Prostate gland (tissue), 2 donors: ENCODE measurements at regions of chr2 and their contacts with region 1.

Region 1: GRCh38 chr2:205766779-205767359 is 84.6 kb downstream of the NRP2 start:
- DNase-seq: peak; percentile 76
- H3K4me3 ChIP-seq: no peak overlapping the region
- H3K27ac ChIP-seq: peak overlapping the region in 1 of 2 donors; percentile 23
- H3K4me1 ChIP-seq: peaks cover 17% of the 10 kb centered on the region
- H3K27me3 ChIP-seq: no peaks in the 10 kb centered on the region
- CTCF ChIP-seq: peak; percentile 75 to 79 (median 76)
- POLR2A ChIP-seq: no peak

Region 2: GRCh38 chr2:205563646-205564045 is 203.2 kb before region 1 on chr2:
- intact Hi-C with region 1: no loop called
- DNase-seq: no peak
- H3K4me3 ChIP-seq: no peak overlapping the region
- H3K27ac ChIP-seq: no peak overlapping the region
- H3K4me1 ChIP-seq: no peaks in the 10 kb centered on the region
- H3K27me3 ChIP-seq: no peaks in the 10 kb centered on the region
- CTCF ChIP-seq: no peak
- POLR2A ChIP-seq: no peak

Region 3: DNA sequence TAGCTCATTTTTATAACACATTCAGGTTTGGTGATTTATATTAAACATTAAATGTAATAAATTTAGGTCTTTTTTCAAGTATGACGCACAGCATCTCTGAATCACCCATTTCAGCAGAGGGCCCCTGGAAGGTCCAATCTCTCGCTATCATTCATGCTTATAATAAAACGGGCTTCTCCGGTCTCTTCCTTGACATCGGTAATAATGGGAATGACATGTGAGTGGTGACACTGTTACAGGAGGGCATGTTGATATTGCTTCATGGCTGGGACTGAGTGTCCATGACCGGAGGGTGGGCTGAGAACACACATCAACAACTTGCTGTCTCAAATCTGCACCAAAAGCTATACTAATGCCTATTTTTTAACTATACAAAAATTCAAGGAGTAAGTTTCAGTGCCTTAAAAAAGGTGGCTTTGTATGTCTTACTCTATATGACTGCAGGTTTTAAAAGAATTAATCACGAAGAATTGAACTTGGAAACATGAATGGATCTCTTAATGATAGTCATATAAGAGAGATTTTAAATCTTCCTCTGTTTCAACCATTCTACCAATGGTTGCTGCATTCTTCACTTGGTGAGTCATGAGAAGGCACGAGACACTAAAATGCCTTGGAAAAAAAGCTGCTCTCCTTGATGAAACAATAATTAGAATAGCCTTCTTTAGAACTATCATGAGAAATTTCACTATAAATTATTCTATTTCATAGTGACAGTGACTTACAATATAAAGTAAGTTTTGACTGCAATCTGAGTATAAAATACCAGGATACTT is 186.5 kb before region 1 on chr2:
- intact Hi-C with region 1: no loop called
- DNase-seq: no peak
- H3K4me3 ChIP-seq: no peak overlapping the region
- H3K27ac ChIP-seq: no peak overlapping the region
- H3K4me1 ChIP-seq: no peaks in the 10 kb centered on the region
- H3K27me3 ChIP-seq: no peaks in the 10 kb centered on the region
- CTCF ChIP-seq: no peak
- POLR2A ChIP-seq: no peak

Region 4: GRCh38 chr2:205885492-205886099 is 118.7 kb after region 1 on chr2:
- intact Hi-C with region 1: loop called (anchors 5 kb)
- DNase-seq: peak; percentile 78
- H3K4me3 ChIP-seq: no peak overlapping the region
- H3K27ac ChIP-seq: no peak overlapping the region
- H3K4me1 ChIP-seq: no peaks in the 10 kb centered on the region
- H3K27me3 ChIP-seq: no peaks in the 10 kb centered on the region
- CTCF ChIP-seq: peak; percentile 61 to 91 (median 89)
- POLR2A ChIP-seq: no peak

Region 5: DNA sequence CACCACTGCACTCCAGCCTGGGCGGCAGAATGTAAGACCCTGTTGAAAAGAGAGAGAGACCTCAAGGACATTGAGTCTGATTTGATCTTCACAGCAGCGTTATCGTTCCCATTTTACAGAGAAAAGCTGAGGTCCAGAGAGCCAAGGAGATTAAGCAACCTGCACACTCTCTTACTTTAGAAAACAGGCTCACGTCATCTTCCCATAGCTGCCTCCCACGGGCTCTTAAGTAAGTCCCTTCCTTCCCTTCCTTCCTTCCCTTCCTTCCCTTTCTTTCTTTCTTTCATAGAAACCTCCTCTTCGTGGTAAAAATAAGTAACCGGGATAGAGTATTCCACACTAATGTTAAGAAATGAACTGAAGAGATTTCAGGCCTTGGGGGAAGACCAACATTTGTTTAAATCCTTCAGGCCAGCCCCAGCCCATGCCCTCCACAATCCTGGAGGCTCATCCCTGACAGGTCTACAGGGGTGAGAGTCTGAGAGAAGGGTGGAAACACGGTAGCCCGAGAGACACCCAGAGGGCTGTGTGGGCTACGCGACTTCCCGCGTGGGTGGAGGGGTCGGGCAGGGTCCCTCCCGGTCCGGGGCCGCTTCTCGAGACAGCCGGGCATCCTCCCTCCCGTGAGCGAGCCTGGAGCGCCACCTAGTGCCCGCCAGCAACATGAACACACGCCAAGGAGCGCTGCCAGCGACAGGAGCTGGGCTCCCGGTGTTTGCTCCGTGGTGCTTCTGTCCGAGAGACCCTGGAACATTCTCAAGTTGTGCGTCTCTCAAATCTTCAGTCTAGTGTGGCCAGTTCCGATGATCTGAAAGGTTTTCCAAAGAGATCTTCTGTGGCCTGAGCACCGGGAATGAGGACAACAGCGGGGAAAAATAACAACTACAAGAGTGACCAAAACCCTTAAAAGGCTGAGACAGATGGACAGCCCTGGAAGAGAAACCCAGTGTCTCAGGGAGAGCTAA is 158.8 kb after region 1 on chr2:
- intact Hi-C with region 1: loop called (anchors 5 kb)
- DNase-seq: peak; percentile 70
- H3K4me3 ChIP-seq: no peak overlapping the region
- H3K27ac ChIP-seq: peak overlapping the region in 1 of 2 donors; percentile 42
- H3K4me1 ChIP-seq: no peaks in the 10 kb centered on the region
- H3K27me3 ChIP-seq: no peaks in the 10 kb centered on the region
- CTCF ChIP-seq: peak; percentile 81 to 93 (median 92)
- POLR2A ChIP-seq: no peak

Region 6: GRCh38 chr2:205947621-205948495 is 181.0 kb after region 1 on chr2:
- intact Hi-C with region 1: loop called (anchors 5 kb)
- DNase-seq: peak; percentile 42
- H3K4me3 ChIP-seq: no peak overlapping the region
- H3K27ac ChIP-seq: no peak overlapping the region
- H3K4me1 ChIP-seq: no peaks in the 10 kb centered on the region
- H3K27me3 ChIP-seq: no peaks in the 10 kb centered on the region
- CTCF ChIP-seq: peak; percentile 67 to 86 (median 83)
- POLR2A ChIP-seq: no peak